Heart right ventricle (tissue), 16 donors: ENCODE measurements at regions of chr17 and their contacts with region 1.

Region 1: DNA sequence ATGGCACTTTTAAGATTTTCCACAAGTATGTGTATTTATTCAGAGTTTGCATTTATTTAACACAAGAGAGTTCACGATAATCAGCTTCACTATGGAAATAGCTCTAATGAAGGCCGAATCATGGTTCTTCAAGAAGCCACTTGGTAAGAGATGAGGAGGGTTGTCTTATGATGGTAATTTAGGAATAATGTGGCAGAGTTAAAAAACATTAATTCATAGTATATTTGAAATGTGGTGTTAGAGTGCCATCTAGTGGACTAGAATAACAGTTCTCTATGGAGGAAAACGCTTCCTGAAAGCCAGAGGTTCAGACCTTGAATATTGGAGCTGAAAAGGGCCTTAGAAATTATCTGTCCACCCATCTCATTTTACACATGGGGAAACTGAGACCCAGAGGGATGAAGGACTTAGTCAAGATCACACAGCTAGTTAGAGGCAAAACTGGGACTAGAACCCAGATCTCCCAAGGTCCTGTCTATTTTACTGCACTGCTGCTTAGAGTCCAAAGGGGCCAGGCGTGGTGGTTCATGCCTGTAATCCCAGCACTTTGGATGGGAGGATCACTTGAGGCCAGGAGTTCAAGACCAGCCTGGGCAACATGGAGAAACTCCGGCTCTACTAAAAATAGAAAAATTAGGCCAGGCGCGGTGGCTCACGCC is 33.8 kb upstream of the KPNB1 start:
- DNase-seq: no peak
- ATAC-seq: peak in 6 of 8 donors; percentile 40 to 67 (median 56)
- H3K4me3 ChIP-seq: no peak overlapping the region
- H3K27ac ChIP-seq: no peak overlapping the region
- H3K4me1 ChIP-seq: peaks cover 0 to 24% (median 12%) of the 10 kb centered on the region in 9 donors
- H3K27me3 ChIP-seq: no peaks in the 10 kb centered on the region
- CTCF ChIP-seq: peak; percentile 59 to 89 (median 76)

Region 2: DNA sequence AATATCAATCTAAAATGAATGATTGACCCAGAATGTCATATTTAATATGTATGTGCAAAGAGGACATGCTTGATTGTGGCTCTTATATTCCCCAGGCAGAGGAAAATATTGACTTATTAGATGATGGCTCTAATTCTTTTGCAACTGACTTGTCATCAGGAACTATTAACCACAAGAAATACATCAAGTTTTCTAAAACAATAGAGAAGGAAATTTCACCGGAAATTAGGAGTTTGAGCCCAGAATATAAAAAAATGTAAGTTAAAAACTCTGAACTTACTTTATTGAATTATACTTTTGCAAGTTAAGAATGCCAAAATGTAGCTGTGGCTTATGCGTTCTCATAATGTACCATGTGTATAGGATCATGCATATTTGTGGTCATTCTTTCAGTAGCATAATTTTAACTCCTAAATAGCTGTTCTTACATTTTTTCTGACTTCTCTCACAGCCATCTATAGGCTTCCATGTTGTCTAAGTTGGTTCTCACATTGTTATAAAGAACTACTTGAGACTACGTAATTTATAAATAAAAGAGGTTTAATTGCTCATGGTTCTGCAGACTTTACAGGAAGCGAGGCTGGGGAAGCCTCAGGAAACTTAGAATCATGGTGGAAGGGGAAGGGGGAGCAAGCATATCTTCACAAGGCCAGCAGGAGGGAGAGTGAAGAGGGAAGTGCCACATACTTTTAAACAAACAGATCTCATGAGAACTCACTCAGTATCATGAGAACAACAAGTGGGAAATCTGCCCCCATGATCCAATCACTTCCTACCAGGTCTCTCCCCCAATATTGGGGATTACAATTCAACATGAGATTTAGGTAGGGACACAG is 280.6 kb before region 1 on chr17:
- intact Hi-C with region 1: no loop called
- DNase-seq: no peak
- ATAC-seq: no peak
- H3K4me3 ChIP-seq: no peak overlapping the region
- H3K27ac ChIP-seq: peak overlapping the region in 3 of 10 donors; percentile 5 to 37 (median 17)
- H3K4me1 ChIP-seq: peaks cover 0 to 9% (median 0%) of the 10 kb centered on the region in 9 donors
- H3K27me3 ChIP-seq: no peaks in the 10 kb centered on the region
- CTCF ChIP-seq: no peak

Region 3: GRCh38 chr17:47363171-47363570 is 252.7 kb before region 1 on chr17:
- intact Hi-C with region 1: loop called in 2 of 10 experiments (anchors 5 to 10 kb)
- DNase-seq: no peak
- ATAC-seq: no peak
- H3K4me3 ChIP-seq: no peak overlapping the region
- H3K27ac ChIP-seq: no peak overlapping the region
- H3K4me1 ChIP-seq: no peaks in the 10 kb centered on the region
- H3K27me3 ChIP-seq: no peaks in the 10 kb centered on the region
- CTCF ChIP-seq: no peak

Region 4: DNA sequence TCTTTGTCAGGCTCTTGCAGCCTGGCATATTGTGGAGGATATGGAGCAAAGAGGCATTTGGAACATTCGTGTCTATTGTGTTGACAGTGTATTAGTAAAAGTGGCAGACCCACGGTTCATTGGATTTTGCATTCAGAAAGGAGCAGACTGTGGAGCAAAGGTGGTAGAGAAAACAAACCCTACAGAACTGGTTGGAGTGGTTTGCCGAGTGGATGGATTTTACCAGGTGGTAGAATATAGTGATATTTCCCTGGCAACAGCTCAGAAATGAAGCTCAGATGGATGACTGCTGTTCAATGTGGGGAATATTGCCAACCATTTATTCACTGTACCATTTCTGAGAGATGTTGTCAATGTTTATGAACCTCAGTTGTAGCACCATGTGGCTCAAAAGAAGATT is 247.6 kb before region 1 on chr17:
- intact Hi-C with region 1: loop called in 2 of 10 experiments (anchors 5 to 10 kb)
- DNase-seq: no peak
- ATAC-seq: no peak
- H3K4me3 ChIP-seq: no peak overlapping the region
- H3K27ac ChIP-seq: no peak overlapping the region
- H3K4me1 ChIP-seq: no peaks in the 10 kb centered on the region
- H3K27me3 ChIP-seq: no peaks in the 10 kb centered on the region
- CTCF ChIP-seq: no peak